Right cardiac atrium (tissue), 5 donors: ENCODE measurements at regions of chr5 and their contacts with region 1.

Region 1: DNA sequence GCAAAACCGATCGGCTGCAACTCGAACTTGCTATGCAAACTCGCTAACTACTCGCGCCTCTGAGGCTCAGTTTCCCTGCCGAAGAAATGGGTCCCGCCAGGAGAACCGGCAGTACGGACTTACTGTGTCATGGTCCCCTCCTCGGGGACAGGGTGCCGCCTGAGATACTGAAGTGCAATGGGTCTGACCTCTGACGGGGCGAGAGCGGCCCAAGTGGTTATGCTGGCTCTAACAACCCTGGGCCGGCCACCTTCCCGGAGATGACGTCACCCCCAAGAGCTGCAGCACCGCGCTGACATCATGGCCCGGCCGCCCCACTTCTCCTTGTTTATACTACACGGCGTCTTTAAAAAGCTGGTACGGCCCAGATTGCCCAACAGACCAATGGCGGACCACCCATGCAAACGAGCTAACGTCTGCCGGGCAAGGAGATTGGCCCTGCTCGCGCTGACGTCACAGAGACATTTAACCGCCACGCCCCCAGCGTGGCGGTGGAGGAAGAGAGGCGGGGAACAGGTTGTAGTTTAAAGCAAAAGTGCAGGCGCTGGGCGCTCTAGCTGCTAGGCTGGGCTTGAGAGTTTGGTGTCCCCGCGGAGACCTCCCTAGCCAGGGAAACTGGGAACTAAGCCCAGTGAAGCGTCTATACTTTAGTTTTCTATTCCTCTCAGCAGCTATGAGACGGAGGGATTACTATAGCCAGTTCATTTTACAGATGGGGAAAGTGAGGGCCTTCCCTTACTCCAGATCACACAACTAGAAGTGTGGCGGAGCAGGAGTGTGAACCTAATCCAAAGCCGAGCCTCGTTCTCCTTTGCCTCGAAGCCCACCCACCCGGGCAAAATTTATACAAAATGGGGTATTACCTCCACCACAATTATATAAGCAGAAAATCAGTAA is 654 bp upstream of the RNF44 start:
- DNase-seq: peak; percentile 99
- ATAC-seq: peak; percentile 92
- H3K4me3 ChIP-seq: peak overlapping the region; percentile 97
- H3K27ac ChIP-seq: peak overlapping the region; percentile 97
- H3K4me1 ChIP-seq: peaks cover 20% of the 10 kb centered on the region
- H3K27me3 ChIP-seq: no peaks in the 10 kb centered on the region

Region 2: GRCh38 chr5:176429972-176430371 is 107.9 kb before region 1 on chr5:
- intact Hi-C with region 1: no loop called
- DNase-seq: no peak
- ATAC-seq: no peak
- H3K4me3 ChIP-seq: no peak overlapping the region
- H3K27ac ChIP-seq: no peak overlapping the region
- H3K4me1 ChIP-seq: no peaks in the 10 kb centered on the region
- H3K27me3 ChIP-seq: no peaks in the 10 kb centered on the region

Region 3: DNA sequence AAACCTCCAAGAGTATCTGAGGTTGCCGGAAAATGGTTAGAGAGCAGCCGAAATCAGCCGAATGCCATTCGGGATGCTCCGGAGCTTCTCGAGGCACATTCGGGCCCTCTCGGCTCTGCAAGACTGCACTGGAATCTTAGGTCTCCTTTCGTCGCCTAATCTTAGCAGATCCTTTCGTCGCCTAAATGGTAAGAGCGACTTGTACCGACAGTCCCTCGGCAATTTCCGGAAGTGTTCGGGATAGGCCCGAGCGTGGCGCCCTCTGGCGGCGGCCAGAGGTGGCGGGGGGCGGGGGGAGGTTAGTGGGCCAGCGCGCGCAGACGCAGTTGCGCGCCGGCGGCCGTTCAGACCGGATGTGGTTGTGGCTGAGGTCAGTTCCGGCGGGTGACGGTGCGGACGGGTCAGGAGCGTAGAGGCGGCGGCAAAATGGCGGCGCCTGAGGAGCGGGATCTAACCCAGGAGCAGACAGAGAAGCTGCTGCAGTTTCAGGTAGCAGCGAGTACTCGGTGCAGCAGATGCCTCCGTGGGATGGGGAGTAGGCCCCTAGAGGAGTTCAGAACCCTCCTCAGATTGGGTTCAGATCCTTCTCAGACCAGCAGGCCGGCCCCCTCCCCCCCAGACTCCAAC is 89.8 kb before region 1 on chr5 and contains the start of gene FAF2:
- intact Hi-C with region 1: loop called in 2 of 4 experiments (anchors 10 kb)
- DNase-seq: peak; percentile 95 to 99 (median 98)
- ATAC-seq: peak; percentile 99
- H3K4me3 ChIP-seq: peak within 1 kb of the TSS; percentile 93
- H3K27ac ChIP-seq: peak within 1 kb of the TSS; percentile 98
- H3K4me1 ChIP-seq: peaks cover 2% of the 10 kb centered on the region
- H3K27me3 ChIP-seq: no peaks in the 10 kb centered on the region
- total RNA-seq, gene FAF2: 17.6 to 25.2 (median 18.8) TPM